H1 (cell line): ENCODE measurements at regions of chr19 and their contacts with region 1.

Region 1: DNA sequence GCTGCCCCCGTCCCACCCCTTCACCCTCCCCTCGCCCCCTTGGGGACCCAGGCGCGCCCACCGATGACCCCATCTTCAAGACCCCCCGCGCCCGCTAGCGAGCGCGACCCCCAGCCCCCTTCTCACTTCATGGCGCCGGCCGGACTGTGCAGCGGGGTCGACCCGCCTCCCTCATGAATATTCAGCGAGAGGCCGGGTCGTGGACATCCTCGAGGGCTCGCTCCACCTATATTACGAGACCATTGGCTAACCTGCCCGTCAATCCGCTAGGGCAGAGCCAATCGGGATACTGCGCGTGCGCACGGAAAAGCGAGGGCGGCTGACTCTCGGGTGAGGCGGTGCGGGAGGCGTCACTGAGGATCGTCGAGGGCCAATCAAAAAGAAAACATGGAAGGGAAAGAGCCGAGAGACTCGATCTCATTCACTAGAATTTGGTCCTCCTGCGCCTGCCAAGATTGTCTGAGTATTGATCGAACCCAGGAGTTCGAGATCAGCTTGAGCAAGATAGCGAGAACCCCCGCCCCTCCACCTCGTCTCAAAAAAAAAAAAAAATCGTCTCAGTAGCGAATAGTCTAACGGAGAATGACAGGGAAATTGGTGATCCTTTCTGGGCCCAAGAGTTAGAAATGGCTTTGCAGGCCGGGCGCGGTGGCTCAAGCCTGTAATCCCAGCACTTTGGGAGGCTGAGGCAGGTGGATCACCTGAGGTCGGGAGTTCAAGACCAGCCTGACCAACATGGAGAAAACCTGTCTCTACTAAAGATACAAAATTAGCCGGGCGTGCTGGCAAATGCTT is at the start of gene ERCC2:
- DNase-seq: peak; percentile 93 to 100
- H3K4me3 ChIP-seq: peak within 1 kb of the TSS; percentile 82 to 97 (median 89)
- H3K27ac ChIP-seq: peak within 1 kb of the TSS; percentile 44; the same call in 1 of the 2 replicates
- H3K4me1 ChIP-seq: peaks cover 0 to 3% (median 0%) of the 10 kb centered on the region in 4 experiments; a peak in 4 of 7 replicates
- H3K27me3 ChIP-seq: no peaks in the 10 kb centered on the region
- CTCF ChIP-seq: no peak
- EP300 ChIP-seq: no peak
- POLR2A ChIP-seq: no peak; a peak in 2 of 3 replicates
- RAD21 ChIP-seq: no peak
- total RNA-seq, gene ERCC2: 93.4 and 107 TPM in 2 replicates

Region 2: DNA sequence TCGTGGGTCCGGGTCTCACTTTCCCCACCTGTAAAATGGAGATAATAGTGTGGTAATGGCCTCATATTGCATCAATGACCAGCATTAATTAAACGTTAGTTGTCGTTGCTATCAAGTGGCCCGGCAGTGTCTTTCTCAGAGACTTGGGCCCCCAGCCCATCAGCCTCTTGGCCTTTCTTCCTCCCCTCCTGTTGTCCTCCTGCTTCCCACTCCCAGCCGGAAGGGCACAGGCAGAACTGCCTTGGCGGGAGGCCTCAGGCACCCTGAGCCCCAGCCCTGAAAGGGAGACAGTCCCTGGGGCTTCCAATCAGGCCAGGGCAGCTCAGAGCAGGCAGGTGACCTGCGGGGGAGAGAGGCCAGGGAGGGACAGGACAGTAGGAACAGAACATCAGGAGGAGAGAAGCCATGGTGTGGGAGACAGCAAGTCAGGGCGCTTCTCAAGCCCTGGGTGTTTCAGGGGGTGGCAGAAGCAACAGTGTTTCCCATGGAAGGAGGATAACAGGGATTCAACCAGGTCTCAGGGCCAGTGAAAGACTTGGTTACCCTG is 114.9 kb before region 1 on chr19:
- CTCF ChIA-PET with region 1: no interaction called
- POLR2A ChIA-PET with region 1: no interaction called
- DNase-seq: no peak
- H3K4me3 ChIP-seq: no peak overlapping the region
- H3K27ac ChIP-seq: no peak overlapping the region
- H3K4me1 ChIP-seq: peaks cover 0 to 6% (median 0%) of the 10 kb centered on the region in 4 experiments; a peak in 2 of 7 replicates
- H3K27me3 ChIP-seq: no peaks in the 10 kb centered on the region
- CTCF ChIP-seq: no peak
- EP300 ChIP-seq: no peak
- POLR2A ChIP-seq: no peak
- RAD21 ChIP-seq: no peak

Region 3: DNA sequence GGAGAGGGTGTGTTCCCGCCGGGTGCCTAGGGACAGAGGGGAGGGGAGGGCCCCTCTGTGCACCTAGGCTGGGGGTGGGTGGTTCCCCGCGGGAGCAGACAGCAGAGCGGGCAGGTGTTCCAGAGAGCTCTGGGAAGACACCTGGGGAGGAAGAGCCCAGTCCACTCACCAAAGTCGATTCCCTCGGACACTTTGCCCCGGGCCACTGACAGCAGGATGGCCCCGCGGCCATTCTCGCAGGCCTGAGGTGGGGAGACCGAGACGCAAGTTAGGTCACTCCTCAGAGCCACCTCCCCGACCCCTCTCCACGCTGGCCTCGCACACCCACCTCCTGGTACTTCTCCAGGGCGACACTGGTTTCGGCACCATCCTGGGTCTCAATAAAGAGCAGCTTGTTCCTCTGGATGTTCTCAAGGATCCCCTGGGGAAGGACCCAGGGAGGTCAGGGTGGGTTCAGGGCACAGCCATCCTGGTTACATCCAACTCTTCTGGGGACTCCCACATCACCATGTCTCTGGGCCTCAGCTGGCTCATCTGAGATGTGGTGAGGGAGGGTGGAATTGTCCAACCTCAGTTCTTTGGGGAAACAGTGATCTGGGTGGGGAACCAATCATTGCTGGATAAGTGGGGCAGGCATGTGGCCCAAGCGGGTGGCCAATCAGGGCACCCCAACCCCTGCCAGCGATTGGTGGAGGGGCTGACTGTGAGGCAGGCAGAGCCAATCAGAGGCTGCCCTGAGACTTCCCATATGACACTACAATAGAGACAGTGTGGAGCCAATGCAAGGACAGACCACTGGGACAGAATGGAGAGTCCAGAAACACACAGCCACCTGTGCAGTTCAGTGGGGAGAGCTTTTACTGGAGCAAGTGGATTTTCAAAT is 17.5 kb before region 1 on chr19:
- CTCF ChIA-PET with region 1: interaction called, 5 read pairs
- POLR2A ChIA-PET with region 1: interaction called, 36 read pairs
- DNase-seq: no peak
- H3K4me3 ChIP-seq: no peak overlapping the region
- H3K27ac ChIP-seq: no peak overlapping the region
- H3K4me1 ChIP-seq: peaks cover 0 to 7% (median 2%) of the 10 kb centered on the region in 4 experiments; a peak in 2 of 7 replicates
- H3K27me3 ChIP-seq: no peaks in the 10 kb centered on the region
- CTCF ChIP-seq: no peak
- EP300 ChIP-seq: no peak
- POLR2A ChIP-seq: no peak
- RAD21 ChIP-seq: no peak

Region 4: GRCh38 chr19:45385392-45386221 is 15.0 kb after region 1 on chr19:
- CTCF ChIA-PET with region 1: interaction called, 13 read pairs
- POLR2A ChIA-PET with region 1: interaction called, 6 read pairs
- DNase-seq: peak in 1 of 2 experiments; percentile 79
- H3K4me3 ChIP-seq: peak overlapping the region in 2 of 4 experiments; percentile 5 to 49; a peak in 4 of 8 replicates
- H3K27ac ChIP-seq: no peak overlapping the region
- H3K4me1 ChIP-seq: peaks cover 0 to 7% (median 4%) of the 10 kb centered on the region in 4 experiments; a peak in 5 of 7 replicates
- H3K27me3 ChIP-seq: peaks cover 6 to 18% (median 16%) of the 10 kb centered on the region in 4 experiments
- CTCF ChIP-seq: peak; percentile 45 to 69 (median 48)
- EP300 ChIP-seq: no peak
- POLR2A ChIP-seq: no peak
- RAD21 ChIP-seq: peak; percentile 16 to 30; a peak in 3 of 4 replicates

Region 5: DNA sequence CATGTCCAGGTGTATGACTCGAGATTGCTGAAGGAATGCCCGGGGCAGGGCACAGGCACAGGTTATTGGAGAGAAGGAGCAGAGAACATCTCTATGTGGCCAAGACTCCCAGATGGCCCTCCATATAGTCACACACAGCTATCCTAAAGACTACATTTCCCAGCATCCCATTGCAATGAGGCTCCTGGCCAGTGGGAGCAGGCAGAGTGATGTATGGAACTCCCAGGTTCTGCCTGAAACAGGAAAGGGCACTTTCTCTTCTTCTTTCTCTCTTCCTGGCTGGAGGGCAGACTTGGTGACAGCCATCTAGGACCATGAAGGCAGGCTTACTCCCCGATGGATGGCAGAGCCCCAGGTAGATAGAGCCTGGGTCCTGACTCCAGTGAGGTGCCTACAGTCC is 20.7 kb after region 1 on chr19:
- CTCF ChIA-PET with region 1: interaction called, 19 read pairs
- POLR2A ChIA-PET with region 1: interaction called, 8 read pairs
- DNase-seq: no peak
- H3K4me3 ChIP-seq: no peak overlapping the region
- H3K27ac ChIP-seq: peak overlapping the region; percentile 23; the same call in 1 of the 2 replicates
- H3K4me1 ChIP-seq: peaks cover 0 to 5% (median 2%) of the 10 kb centered on the region in 4 experiments; a peak in 4 of 7 replicates
- H3K27me3 ChIP-seq: peaks cover 2 to 11% (median 5%) of the 10 kb centered on the region in 4 experiments; a peak in 6 of 7 replicates
- CTCF ChIP-seq: no peak
- EP300 ChIP-seq: no peak
- POLR2A ChIP-seq: no peak
- RAD21 ChIP-seq: no peak

Region 6: GRCh38 chr19:45442778-45443461 is 72.3 kb after region 1 on chr19:
- CTCF ChIA-PET with region 1: no interaction called
- POLR2A ChIA-PET with region 1: no interaction called
- DNase-seq: peak in 1 of 2 experiments; percentile 74
- H3K4me3 ChIP-seq: peak overlapping the region; percentile 38 to 84 (median 71)
- H3K27ac ChIP-seq: no peak overlapping the region
- H3K4me1 ChIP-seq: peaks cover 6 to 17% (median 11%) of the 10 kb centered on the region in 4 experiments
- H3K27me3 ChIP-seq: peaks cover 0 to 5% (median 2%) of the 10 kb centered on the region in 4 experiments; a peak in 3 of 7 replicates
- CTCF ChIP-seq: no peak
- EP300 ChIP-seq: no peak
- POLR2A ChIP-seq: no peak
- RAD21 ChIP-seq: no peak